Mammary epithelial cell (primary cell): ENCODE measurements at regions of chr2 and their contacts with region 1.

Region 1: GRCh38 chr2:173075781-173076580 is at the start of gene MAP3K20:
- DNase-seq: peak; percentile 65
- H3K4me3 ChIP-seq: peak within 1 kb of the TSS; percentile 66 to 88 (median 84)
- H3K27ac ChIP-seq: peak within 1 kb of the TSS; percentile 95
- H3K4me1 ChIP-seq: peaks cover 35% of the 10 kb centered on the region
- H3K27me3 ChIP-seq: no peaks in the 10 kb centered on the region
- CTCF ChIP-seq: peak in 1 of 2 donors; percentile 58
- total RNA-seq, gene MAP3K20: 31.8 to 109 TPM

Region 2: DNA sequence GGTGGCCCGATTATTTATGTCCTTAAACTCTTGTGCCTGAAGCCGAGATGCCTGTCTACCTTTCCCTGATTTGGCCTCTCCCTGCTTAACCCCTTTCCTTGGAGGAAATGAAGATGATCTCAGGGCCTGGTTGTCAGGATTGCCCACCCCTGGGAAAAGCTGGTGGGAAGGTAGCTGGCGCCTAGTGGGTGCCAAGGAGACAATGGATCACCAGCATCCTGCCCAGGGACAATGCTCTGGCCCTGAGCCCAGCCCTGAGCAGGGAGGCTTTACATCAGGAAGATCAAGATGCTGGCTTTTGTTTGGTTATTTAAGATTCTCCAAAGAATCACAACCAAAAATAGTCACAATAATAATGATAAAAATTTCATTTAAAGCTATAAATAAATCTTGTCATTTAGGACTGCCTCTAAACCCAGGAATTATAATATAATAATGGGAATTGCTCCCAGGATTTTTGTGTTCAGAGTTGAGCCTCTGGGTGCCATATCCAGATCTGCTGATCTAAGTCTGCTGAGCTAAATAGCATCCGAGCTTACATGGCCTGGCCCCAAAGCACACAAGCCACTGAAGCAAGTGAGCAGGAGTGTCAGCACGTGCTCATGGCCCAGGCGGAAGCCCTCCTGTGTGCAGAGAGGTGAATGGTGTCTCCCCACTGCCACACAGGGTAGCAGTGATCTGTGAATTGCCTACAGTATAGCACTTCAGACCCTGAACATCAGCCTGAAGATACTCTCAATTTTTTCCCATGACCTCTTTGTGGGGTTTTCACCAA is 58.1 kb before region 1 on chr2:
- CTCF ChIA-PET with region 1: no interaction called
- dilution Hi-C with region 1: no loop called
- in situ Hi-C with region 1: no loop called
- intact Hi-C with region 1: no loop called
- DNase-seq: no peak
- H3K4me3 ChIP-seq: no peak overlapping the region
- H3K27ac ChIP-seq: no peak overlapping the region
- H3K4me1 ChIP-seq: no peaks in the 10 kb centered on the region
- H3K27me3 ChIP-seq: no peaks in the 10 kb centered on the region
- CTCF ChIP-seq: no peak

Region 3: DNA sequence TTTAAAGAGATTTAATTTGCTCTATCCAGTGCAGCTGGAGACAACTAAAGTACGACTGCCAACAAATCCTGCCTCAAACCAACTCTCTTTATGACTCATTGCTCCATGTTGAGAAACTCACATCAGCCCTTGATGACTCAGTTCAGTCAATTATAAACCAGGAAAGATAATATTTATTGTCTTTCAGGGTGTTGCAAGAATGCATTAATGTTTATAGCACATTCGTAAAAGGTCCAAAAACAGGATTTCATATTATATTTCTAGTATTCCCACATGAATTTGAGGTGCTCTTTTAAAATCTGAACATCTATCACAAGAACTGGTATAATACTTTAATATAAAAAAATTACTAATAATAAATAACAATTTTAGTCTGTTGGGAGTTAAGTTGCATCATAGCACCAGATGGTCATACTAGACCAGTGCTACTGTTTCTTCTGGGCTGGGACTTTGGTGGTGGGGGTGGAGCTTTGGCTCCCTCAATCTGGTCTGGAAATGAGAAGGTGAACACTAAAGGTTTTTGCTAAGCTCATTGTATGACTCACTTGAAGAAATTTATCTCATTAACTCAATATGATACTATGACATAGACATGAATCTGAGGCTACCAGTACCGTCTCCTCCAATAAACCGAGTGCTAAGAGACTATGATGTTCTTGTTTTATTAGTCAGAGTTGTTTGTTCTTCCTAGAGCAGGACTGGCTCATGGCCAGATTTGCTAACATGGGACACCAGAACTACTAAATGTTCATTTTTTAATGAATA is 26.9 kb before region 1 on chr2:
- CTCF ChIA-PET with region 1: interaction called, 4 read pairs
- dilution Hi-C with region 1: no loop called
- in situ Hi-C with region 1: no loop called
- intact Hi-C with region 1: loop called (anchors 1 kb)
- DNase-seq: peak; percentile 99
- H3K4me3 ChIP-seq: no peak overlapping the region
- H3K27ac ChIP-seq: peak overlapping the region; percentile 100
- H3K4me1 ChIP-seq: peaks cover 35% of the 10 kb centered on the region
- H3K27me3 ChIP-seq: no peaks in the 10 kb centered on the region
- CTCF ChIP-seq: no peak

Region 4: GRCh38 chr2:173059927-173060565 is 15.9 kb before region 1 on chr2:
- CTCF ChIA-PET with region 1: no interaction called
- dilution Hi-C with region 1: no loop called
- in situ Hi-C with region 1: no loop called
- intact Hi-C with region 1: loop called (anchors 2 kb)
- DNase-seq: no peak
- H3K4me3 ChIP-seq: no peak overlapping the region
- H3K27ac ChIP-seq: peak overlapping the region; percentile 27
- H3K4me1 ChIP-seq: peaks cover 11% of the 10 kb centered on the region
- H3K27me3 ChIP-seq: no peaks in the 10 kb centered on the region
- CTCF ChIP-seq: no peak

Region 5: DNA sequence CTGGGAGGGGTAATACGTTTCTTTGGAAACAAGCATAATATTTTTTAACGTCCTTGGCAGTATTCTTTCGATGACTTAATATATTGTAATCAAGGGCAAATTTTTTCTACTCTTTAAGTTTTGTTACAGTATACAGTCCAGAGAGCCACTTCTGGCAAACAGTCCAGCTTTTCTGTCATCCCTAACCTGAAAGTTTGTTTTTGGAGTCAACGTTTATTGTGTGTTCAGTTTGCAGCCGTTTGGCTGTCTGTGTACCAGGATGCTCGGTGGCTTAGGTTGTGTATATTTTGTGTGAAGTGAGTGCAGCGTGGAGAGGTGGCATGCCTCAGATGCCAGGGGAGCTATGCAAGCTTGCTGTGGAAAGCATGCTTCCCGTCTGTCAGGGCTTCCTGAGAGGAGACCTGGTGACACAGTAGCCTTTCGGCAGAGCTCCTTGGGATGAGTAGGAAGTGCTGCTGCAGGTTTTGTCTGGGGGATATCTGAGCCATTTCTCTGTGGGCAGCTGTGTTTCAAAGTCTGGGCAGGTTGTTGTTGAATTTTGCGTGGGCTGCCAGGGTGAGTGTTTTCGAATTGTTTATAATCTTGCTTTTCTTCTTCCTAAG is 14.4 kb after region 1 on chr2:
- CTCF ChIA-PET with region 1: no interaction called
- dilution Hi-C with region 1: no loop called
- in situ Hi-C with region 1: no loop called
- intact Hi-C with region 1: no loop called
- DNase-seq: no peak
- H3K4me3 ChIP-seq: no peak overlapping the region
- H3K27ac ChIP-seq: peak overlapping the region; percentile 40
- H3K4me1 ChIP-seq: peaks cover 19% of the 10 kb centered on the region
- H3K27me3 ChIP-seq: no peaks in the 10 kb centered on the region
- CTCF ChIP-seq: no peak

Region 6: DNA sequence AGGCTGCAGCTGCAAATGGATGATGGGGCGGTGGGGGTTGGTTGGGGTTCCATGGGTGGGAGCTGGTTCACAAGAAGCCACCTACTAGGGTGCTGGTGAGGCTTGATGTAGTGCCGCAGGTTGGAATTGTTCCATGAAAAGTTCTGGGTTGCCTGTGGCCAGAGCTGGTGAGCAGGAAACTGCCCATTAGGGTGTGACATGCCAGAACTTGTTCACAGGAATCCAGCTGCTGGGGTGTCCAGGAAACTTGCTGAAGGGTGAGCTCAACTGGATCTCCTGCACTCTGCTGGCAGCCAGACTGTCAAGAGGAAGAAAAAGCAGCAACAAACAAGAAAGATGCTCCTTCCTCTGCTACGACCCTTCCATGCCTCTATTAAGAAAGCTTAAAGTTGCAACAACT is 48.5 kb after region 1 on chr2:
- CTCF ChIA-PET with region 1: no interaction called
- dilution Hi-C with region 1: no loop called
- in situ Hi-C with region 1: no loop called
- intact Hi-C with region 1: loop called (anchors 5 kb)
- DNase-seq: peak; percentile 94
- H3K4me3 ChIP-seq: no peak overlapping the region
- H3K27ac ChIP-seq: peak overlapping the region; percentile 37
- H3K4me1 ChIP-seq: peaks cover 37% of the 10 kb centered on the region
- H3K27me3 ChIP-seq: no peaks in the 10 kb centered on the region
- CTCF ChIP-seq: peak in 1 of 2 donors; percentile 36

Region 7: DNA sequence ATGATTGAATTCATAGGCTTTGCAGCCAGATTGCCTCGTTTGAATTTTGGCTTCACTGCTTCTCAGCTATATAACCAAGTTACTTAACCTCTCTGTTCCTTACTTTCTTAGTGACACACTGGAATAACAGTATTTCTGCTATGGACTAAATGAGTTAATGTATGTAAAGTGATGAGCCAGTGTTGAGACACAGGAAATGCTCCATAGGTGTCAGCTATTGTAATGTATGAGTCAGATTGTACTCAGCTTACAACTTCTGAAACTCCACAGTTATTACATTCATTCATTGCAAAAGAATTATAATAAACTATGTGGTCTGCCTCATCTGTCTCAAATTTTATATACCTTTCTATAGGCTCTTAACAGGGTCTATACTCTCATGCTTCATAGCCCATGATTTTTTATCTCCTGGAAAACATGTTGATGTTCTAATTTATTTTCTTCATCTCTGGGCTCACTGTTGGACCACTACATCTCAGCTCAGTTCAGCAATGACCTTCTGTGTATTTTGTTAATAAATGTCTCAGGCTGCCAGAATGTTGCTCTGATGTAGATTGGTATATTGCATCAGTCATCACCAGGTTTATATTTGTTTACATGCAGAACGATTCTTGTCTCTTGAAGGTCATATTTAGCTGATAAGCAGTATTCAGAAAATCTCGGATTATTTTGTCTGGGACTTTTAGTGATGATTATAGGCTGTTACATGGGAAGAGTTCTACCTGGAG is 75.9 kb after region 1 on chr2:
- CTCF ChIA-PET with region 1: no interaction called
- dilution Hi-C with region 1: no loop called
- in situ Hi-C with region 1: no loop called
- intact Hi-C with region 1: loop called (anchors 2 kb)
- DNase-seq: peak; percentile 90
- H3K4me3 ChIP-seq: no peak overlapping the region
- H3K27ac ChIP-seq: peak overlapping the region; percentile 86
- H3K4me1 ChIP-seq: peaks cover 57% of the 10 kb centered on the region
- H3K27me3 ChIP-seq: no peaks in the 10 kb centered on the region
- CTCF ChIP-seq: no peak

Region 8: GRCh38 chr2:173159794-173160463 is 83.9 kb after region 1 on chr2:
- CTCF ChIA-PET with region 1: no interaction called
- dilution Hi-C with region 1: no loop called
- in situ Hi-C with region 1: no loop called
- intact Hi-C with region 1: loop called (anchors 2 kb)
- DNase-seq: peak; percentile 99
- H3K4me3 ChIP-seq: no peak overlapping the region
- H3K27ac ChIP-seq: peak overlapping the region; percentile 82
- H3K4me1 ChIP-seq: peaks cover 32% of the 10 kb centered on the region
- H3K27me3 ChIP-seq: no peaks in the 10 kb centered on the region
- CTCF ChIP-seq: no peak

Region 9: DNA sequence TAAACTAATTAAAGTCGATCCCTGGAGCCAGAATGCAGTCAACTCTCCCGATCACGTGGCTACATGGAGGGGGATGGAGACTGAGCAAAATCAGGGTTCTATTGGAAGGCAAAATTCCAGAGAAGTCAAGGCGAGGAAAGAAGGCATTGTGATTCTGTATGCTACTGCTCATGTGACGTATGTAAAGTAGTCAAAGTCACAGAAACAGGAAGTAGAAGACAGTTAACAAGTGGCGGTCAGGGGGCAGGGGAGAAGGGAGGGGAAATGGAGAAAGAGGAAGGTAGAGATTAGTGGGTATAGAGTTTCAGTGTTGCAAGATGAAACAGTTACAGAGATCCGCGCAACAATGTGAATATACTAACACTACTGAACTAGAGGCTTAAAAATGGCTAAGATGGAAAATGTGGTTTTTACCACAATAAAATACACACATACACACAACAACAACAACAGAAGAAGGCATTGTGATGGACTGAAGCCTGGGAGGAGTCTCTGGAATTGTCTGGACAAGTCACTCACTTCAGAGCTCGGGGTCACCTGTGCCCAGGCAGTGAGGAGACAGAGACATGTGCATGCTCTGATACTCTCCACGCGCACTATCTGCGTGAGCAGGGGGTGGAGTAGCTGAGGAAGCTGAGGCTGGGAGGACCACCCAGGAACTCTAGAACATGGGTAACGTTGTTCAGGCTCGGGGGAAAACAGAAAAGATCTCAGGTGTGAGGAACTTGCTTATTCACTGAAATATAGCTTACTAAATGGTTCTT is 188.8 kb after region 1 on chr2:
- CTCF ChIA-PET with region 1: no interaction called
- dilution Hi-C with region 1: no loop called
- in situ Hi-C with region 1: no loop called
- intact Hi-C with region 1: no loop called
- DNase-seq: no peak
- H3K4me3 ChIP-seq: no peak overlapping the region
- H3K27ac ChIP-seq: no peak overlapping the region
- H3K4me1 ChIP-seq: no peaks in the 10 kb centered on the region
- H3K27me3 ChIP-seq: no peaks in the 10 kb centered on the region
- CTCF ChIP-seq: no peak